ENCODE measurements at regions of chr14 and their contacts with region 1.

Region 1: GRCh38 chr14:22386924-22387775 is 201.9 kb downstream of the DAD1 start:
- DNase-seq: peak; percentile 39
- H3K4me3 ChIP-seq: no peak overlapping the region
- H3K27ac ChIP-seq: no peak overlapping the region
- H3K4me1 ChIP-seq: peaks cover 16% of the 10 kb centered on the region
- H3K27me3 ChIP-seq: peaks cover 4% of the 10 kb centered on the region
- CTCF ChIP-seq: peak; percentile 48 to 77

Region 2: DNA sequence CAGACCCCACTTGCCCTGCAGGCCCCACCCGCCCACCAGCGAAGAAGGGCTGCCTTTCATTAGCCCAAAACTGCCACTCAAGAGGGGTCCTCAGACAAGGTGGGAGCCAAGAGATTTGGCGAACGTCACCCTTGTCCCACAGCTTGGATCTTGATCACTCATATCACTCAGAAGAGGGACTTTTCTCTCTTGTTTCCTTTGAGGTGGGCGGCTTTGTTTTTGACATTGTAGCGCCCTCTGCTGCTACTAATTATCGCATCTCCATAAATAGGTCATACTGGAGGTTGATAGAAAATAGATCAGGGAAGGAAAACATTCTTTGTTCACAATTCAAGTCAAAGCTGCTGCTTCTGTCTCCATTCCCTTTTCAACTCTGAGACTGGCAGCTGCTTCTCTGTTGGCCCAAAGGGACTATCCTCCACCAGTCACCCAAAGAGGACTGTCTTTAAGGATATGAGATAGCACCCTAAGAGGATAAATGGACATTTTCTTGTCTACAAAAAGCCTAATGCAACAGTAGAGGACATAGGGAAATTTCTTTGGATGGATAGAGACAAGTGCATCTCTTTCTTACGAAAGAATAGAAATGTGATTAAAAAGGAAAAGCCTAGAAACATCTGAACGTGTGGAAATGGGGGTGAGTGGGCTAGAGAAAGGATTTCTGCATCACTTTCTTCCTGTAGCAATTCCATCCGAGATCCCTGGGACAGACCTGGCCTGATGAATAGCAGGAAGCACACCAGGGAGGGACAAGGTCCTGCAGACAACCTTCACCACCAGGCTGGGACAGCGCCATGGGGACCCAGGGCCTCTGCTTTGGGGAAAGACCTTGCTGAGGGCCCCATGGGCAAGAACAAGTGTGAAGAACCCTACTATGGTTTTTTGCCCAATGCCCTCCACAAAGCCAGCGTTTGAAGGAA is 86.0 kb after region 1 on chr14:
- CTCF ChIA-PET with region 1: interaction called, 5 read pairs
- dilution Hi-C with region 1: no loop called
- in situ Hi-C with region 1: loop called (anchors 5 kb)
- intact Hi-C with region 1: loop called (anchors 1 kb)
- DNase-seq: peak; percentile 39
- H3K4me3 ChIP-seq: no peak overlapping the region
- H3K27ac ChIP-seq: no peak overlapping the region
- H3K4me1 ChIP-seq: no peaks in the 10 kb centered on the region
- H3K27me3 ChIP-seq: peaks cover 5% of the 10 kb centered on the region
- CTCF ChIP-seq: peak; percentile 52 to 65